T-cell (primary cell): ENCODE measurements at regions of chr10 and their contacts with region 1.

Region 1: DNA sequence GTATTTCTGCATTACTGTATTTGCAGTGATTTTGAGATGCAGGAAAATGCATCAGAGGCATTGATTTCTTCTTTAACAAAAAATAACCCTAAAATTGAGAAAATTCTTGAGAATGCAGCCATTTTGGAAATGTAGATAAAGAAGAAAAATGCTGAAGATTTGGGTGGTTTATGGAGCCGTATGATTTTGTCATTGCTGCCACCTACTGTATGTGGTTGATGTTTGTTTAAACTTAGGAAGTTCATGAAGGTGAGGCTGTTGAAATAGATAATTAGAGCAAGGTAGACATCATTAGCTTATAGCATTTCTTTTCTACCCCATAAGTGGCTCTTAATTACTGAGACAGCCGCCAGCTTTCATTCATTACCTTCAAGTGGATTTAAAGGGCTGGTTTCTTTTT is 92.1 kb upstream of the SAMD8 start:
- DNase-seq: peak in 1 of 35 experiments; percentile 62
- ATAC-seq: peak in 3 of 4 experiments; percentile 25 to 67 (median 48)
- H3K4me3 ChIP-seq: no peak overlapping the region
- H3K4me3 Mint-ChIP-seq: no peak overlapping the region
- H3K27ac ChIP-seq: no peak overlapping the region
- H3K27ac Mint-ChIP-seq: peak overlapping the region; percentile 23 to 89
- H3K4me1 ChIP-seq: peaks cover 3 to 16% of the 10 kb centered on the region in 2 experiments
- H3K4me1 Mint-ChIP-seq: peaks cover 31 to 56% (median 32%) of the 10 kb centered on the region in 3 donors
- H3K27me3 ChIP-seq: no peaks in the 10 kb centered on the region
- H3K27me3 Mint-ChIP-seq: no peaks in the 10 kb centered on the region

Region 2: GRCh38 chr10:73979141-73979808 is 1040.1 kb before region 1 on chr10:
- CTCF ChIA-PET with region 1: interaction called in 1 of 2 experiments, 10 read pairs
- POLR2A ChIA-PET with region 1: no interaction called
- DNase-seq: no peak
- ATAC-seq: no peak
- H3K4me3 ChIP-seq: no peak overlapping the region
- H3K4me3 Mint-ChIP-seq: no peak overlapping the region
- H3K27ac ChIP-seq: no peak overlapping the region
- H3K27ac Mint-ChIP-seq: no peak overlapping the region
- H3K4me1 ChIP-seq: peaks cover 4 to 7% of the 10 kb centered on the region in 2 experiments
- H3K4me1 Mint-ChIP-seq: peaks cover 19 to 31% (median 25%) of the 10 kb centered on the region in 3 donors
- H3K27me3 ChIP-seq: no peaks in the 10 kb centered on the region
- H3K27me3 Mint-ChIP-seq: no peaks in the 10 kb centered on the region

Region 3: GRCh38 chr10:74244097-74244685 is 775.2 kb before region 1 on chr10:
- CTCF ChIA-PET with region 1: interaction called, 8 to 11 read pairs
- POLR2A ChIA-PET with region 1: no interaction called
- DNase-seq: peak in 9 of 35 experiments; percentile 9 to 70 (median 19)
- ATAC-seq: no peak
- H3K4me3 ChIP-seq: no peak overlapping the region
- H3K4me3 Mint-ChIP-seq: no peak overlapping the region
- H3K27ac ChIP-seq: no peak overlapping the region
- H3K27ac Mint-ChIP-seq: no peak overlapping the region
- H3K4me1 ChIP-seq: no peaks in the 10 kb centered on the region
- H3K4me1 Mint-ChIP-seq: peaks cover 0 to 2% (median 0%) of the 10 kb centered on the region in 3 donors
- H3K27me3 ChIP-seq: no peaks in the 10 kb centered on the region
- H3K27me3 Mint-ChIP-seq: no peaks in the 10 kb centered on the region

Region 4: DNA sequence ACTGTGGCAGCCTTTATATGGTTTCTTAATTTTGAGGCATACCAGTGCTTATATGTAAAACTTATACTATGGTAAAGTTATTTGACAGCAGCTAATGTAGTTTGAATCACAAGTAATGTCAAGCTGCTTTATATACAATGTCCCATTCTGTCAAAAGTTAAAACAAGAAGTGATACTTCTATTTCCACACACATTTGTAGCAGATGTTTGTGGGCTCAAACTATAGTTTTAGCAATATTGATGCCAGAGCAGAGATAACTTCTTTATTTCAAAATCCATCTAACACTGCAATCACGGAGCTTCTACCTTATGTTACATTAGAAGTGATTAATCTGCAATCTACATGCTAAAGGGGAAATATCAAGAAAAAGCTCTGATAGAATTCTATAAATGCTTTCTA is 718.7 kb before region 1 on chr10:
- CTCF ChIA-PET with region 1: interaction called in 1 of 2 experiments, 5 read pairs
- POLR2A ChIA-PET with region 1: interaction called in 1 of 2 experiments, 13 read pairs
- DNase-seq: no peak
- ATAC-seq: no peak
- H3K4me3 ChIP-seq: no peak overlapping the region
- H3K4me3 Mint-ChIP-seq: no peak overlapping the region
- H3K27ac ChIP-seq: no peak overlapping the region
- H3K27ac Mint-ChIP-seq: no peak overlapping the region
- H3K4me1 ChIP-seq: no peaks in the 10 kb centered on the region
- H3K4me1 Mint-ChIP-seq: peaks cover 6 to 17% (median 14%) of the 10 kb centered on the region in 3 donors
- H3K27me3 ChIP-seq: no peaks in the 10 kb centered on the region
- H3K27me3 Mint-ChIP-seq: no peaks in the 10 kb centered on the region

Region 5: GRCh38 chr10:74419958-74420375 is 599.4 kb before region 1 on chr10:
- CTCF ChIA-PET with region 1: interaction called, 3 to 10 read pairs
- POLR2A ChIA-PET with region 1: no interaction called
- DNase-seq: peak in 29 of 35 experiments; percentile 3 to 58 (median 29)
- ATAC-seq: peak in 2 of 4 experiments; percentile 43 to 55
- H3K4me3 ChIP-seq: no peak overlapping the region
- H3K4me3 Mint-ChIP-seq: no peak overlapping the region
- H3K27ac ChIP-seq: no peak overlapping the region
- H3K27ac Mint-ChIP-seq: no peak overlapping the region
- H3K4me1 ChIP-seq: no peaks in the 10 kb centered on the region
- H3K4me1 Mint-ChIP-seq: peaks cover 5 to 11% (median 6%) of the 10 kb centered on the region in 3 donors
- H3K27me3 ChIP-seq: no peaks in the 10 kb centered on the region
- H3K27me3 Mint-ChIP-seq: no peaks in the 10 kb centered on the region

Region 6: GRCh38 chr10:74690393-74690792 is 329.0 kb before region 1 on chr10:
- CTCF ChIA-PET with region 1: no interaction called
- POLR2A ChIA-PET with region 1: interaction called in 1 of 2 experiments, 10 read pairs
- DNase-seq: no peak
- ATAC-seq: no peak
- H3K4me3 ChIP-seq: no peak overlapping the region
- H3K4me3 Mint-ChIP-seq: no peak overlapping the region
- H3K27ac ChIP-seq: no peak overlapping the region
- H3K27ac Mint-ChIP-seq: no peak overlapping the region
- H3K4me1 ChIP-seq: no peaks in the 10 kb centered on the region
- H3K4me1 Mint-ChIP-seq: no peaks in the 10 kb centered on the region
- H3K27me3 ChIP-seq: no peaks in the 10 kb centered on the region
- H3K27me3 Mint-ChIP-seq: no peaks in the 10 kb centered on the region

Region 7: GRCh38 chr10:74967911-74968645 is 51.3 kb before region 1 on chr10:
- CTCF ChIA-PET with region 1: no interaction called
- POLR2A ChIA-PET with region 1: no interaction called
- DNase-seq: peak in 16 of 35 experiments; percentile 3 to 44 (median 15)
- ATAC-seq: peak; percentile 45 to 87 (median 50)
- H3K4me3 ChIP-seq: peak overlapping the region in 1 of 2 donors; percentile 13
- H3K4me3 Mint-ChIP-seq: peak overlapping the region; percentile 54 to 69 (median 66)
- H3K27ac ChIP-seq: peak overlapping the region; percentile 60
- H3K27ac Mint-ChIP-seq: peak overlapping the region; percentile 88 to 95
- H3K4me1 ChIP-seq: peaks cover 9 to 19% of the 10 kb centered on the region in 2 experiments
- H3K4me1 Mint-ChIP-seq: peaks cover 35 to 44% (median 42%) of the 10 kb centered on the region in 3 donors
- H3K27me3 ChIP-seq: no peaks in the 10 kb centered on the region
- H3K27me3 Mint-ChIP-seq: no peaks in the 10 kb centered on the region

Region 8: DNA sequence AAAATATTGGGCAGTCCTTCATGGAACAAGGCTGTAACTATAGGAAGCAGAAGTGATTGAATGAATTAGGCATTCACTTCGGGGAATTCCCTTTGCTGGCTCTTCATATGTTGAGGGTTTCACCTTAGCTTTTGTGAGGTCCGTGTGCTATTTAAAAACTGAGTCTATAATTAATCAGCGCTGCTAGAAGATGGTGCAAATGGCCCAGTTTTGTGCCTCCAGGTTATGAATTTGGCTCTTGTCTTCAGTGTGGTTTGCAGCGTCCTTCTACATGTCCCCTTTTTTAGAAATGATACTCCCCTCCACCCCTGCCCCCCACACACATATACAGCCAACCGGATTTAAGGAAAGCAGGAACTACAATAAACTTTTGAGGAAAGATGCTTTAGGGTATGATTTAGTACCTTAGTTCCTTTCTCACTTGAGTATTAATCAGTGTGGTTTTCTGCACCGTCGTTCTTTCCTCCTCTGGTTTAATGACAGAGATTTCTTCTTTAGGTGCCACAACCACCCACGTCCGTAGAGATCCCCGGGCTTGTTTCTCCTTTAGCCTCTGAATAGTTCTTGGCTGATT is 18.5 kb before region 1 on chr10:
- CTCF ChIA-PET with region 1: interaction called, 6 to 10 read pairs
- POLR2A ChIA-PET with region 1: interaction called in 1 of 2 experiments, 10 read pairs
- DNase-seq: no peak
- ATAC-seq: no peak
- H3K4me3 ChIP-seq: no peak overlapping the region
- H3K4me3 Mint-ChIP-seq: no peak overlapping the region
- H3K27ac ChIP-seq: no peak overlapping the region
- H3K27ac Mint-ChIP-seq: peak overlapping the region; percentile 19 to 73
- H3K4me1 ChIP-seq: no peaks in the 10 kb centered on the region
- H3K4me1 Mint-ChIP-seq: peaks cover 0 to 24% (median 15%) of the 10 kb centered on the region in 3 donors
- H3K27me3 ChIP-seq: no peaks in the 10 kb centered on the region
- H3K27me3 Mint-ChIP-seq: no peaks in the 10 kb centered on the region